ENCODE measurements at regions of chr15 and their contacts with region 1.

Region 1: GRCh38 chr15:88800026-88800425 is 3.2 kb upstream of the ACAN start:
- DNase-seq: peak; percentile 89
- H3K4me3 ChIP-seq: no peak overlapping the region
- H3K27ac ChIP-seq: no peak overlapping the region
- H3K4me1 ChIP-seq: peaks cover 10% of the 10 kb centered on the region
- H3K27me3 ChIP-seq: peaks cover 25% of the 10 kb centered on the region
- CTCF ChIP-seq: peak in 1 of 2 donors; percentile 9

Region 2: GRCh38 chr15:88769161-88769971 is 30.7 kb before region 1 on chr15:
- CTCF ChIA-PET with region 1: no interaction called
- dilution Hi-C with region 1: loop called (anchors 5 kb)
- in situ Hi-C with region 1: no loop called
- intact Hi-C with region 1: no loop called
- DNase-seq: peak; percentile 25
- H3K4me3 ChIP-seq: peak overlapping the region; percentile 26 to 31 (median 27)
- H3K27ac ChIP-seq: no peak overlapping the region
- H3K4me1 ChIP-seq: peaks cover 6% of the 10 kb centered on the region
- H3K27me3 ChIP-seq: peaks cover 3% of the 10 kb centered on the region
- CTCF ChIP-seq: no peak

Region 3: DNA sequence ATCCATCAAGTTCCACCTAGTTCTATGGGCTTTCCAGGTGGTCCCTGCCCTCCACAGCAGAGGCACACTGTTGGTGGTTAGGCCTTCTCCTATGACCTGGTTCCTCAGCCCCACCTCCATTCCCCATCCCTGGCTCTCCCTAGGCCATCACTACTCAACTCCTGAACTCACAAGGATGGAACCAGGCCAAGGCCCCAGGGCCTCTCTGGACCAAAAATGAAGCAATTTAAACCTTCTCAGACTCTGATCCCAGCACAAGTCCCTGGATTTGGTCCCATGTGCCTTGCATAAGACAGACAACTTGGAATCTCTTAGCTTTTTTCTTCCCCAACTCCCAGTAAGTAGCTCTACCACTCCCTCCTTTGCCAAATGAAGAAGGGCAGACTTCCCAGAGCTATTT is 11.2 kb before region 1 on chr15:
- CTCF ChIA-PET with region 1: no interaction called
- dilution Hi-C with region 1: no loop called
- in situ Hi-C with region 1: no loop called
- intact Hi-C with region 1: no loop called
- DNase-seq: no peak
- H3K4me3 ChIP-seq: no peak overlapping the region
- H3K27ac ChIP-seq: no peak overlapping the region
- H3K4me1 ChIP-seq: peaks cover 32% of the 10 kb centered on the region
- H3K27me3 ChIP-seq: no peaks in the 10 kb centered on the region
- CTCF ChIP-seq: no peak

Measured in mammary epithelial cell (primary cell).